ENCODE measurements at regions of chr1 and their contacts with region 1.

Region 1: DNA sequence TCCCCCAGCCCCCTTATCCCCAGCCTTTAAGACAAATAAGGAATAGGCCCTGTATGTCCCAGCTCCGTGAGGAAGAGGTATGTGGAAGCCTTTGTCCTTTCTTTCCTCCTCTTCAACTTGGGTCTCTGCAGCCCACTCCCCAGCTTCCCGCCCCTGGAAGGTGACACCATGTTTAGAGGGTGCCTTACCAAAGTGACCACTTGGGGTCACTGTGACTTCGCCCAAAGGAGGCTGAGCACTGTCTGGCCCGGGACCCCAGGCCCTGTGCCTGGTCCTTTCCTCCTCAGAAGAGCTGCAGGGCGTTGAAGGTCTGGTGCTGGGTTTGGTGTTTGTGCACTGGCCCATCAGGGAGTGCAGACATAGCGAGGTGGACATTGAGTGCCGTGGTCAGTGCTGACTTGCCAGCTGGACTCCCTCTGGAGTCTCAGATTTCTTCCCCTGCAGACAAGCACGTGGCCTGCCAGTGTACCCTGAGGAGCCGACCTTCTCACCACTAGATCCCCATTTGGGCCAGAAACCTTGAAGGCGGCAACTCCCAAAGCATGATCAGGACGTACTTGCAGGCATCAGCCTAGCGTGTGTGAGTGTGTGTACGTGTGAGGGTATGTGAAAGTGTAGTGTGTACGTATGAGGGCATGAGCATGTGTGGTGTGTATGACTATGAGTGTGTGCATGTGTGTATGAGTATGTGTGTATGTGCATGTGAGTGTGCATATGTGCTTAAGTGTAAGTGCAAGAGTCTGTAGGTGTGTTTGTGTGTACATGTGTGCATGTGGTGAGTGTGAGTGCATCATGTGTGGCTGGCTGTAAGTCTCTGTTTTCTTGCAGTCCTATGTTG is 181.4 kb upstream of the KIAA0040 start:
- DNase-seq: peak; percentile 47
- H3K4me3 Mint-ChIP-seq: no peak overlapping the region
- H3K27ac Mint-ChIP-seq: no peak overlapping the region
- H3K4me1 Mint-ChIP-seq: no peaks in the 10 kb centered on the region
- H3K27me3 Mint-ChIP-seq: peaks cover 48% of the 10 kb centered on the region
- CTCF ChIP-seq: peak; percentile 92

Region 2: GRCh38 chr1:175471039-175471800 is 97.2 kb after region 1 on chr1:
- CTCF ChIA-PET with region 1: interaction called, 10 read pairs
- POLR2A ChIA-PET with region 1: no interaction called
- intact Hi-C with region 1: no loop called
- DNase-seq: peak; percentile 95
- H3K4me3 Mint-ChIP-seq: no peak overlapping the region
- H3K27ac Mint-ChIP-seq: peak overlapping the region; percentile 65
- H3K4me1 Mint-ChIP-seq: peaks cover 30% of the 10 kb centered on the region
- H3K27me3 Mint-ChIP-seq: peaks cover 72% of the 10 kb centered on the region
- CTCF ChIP-seq: no peak

Region 3: DNA sequence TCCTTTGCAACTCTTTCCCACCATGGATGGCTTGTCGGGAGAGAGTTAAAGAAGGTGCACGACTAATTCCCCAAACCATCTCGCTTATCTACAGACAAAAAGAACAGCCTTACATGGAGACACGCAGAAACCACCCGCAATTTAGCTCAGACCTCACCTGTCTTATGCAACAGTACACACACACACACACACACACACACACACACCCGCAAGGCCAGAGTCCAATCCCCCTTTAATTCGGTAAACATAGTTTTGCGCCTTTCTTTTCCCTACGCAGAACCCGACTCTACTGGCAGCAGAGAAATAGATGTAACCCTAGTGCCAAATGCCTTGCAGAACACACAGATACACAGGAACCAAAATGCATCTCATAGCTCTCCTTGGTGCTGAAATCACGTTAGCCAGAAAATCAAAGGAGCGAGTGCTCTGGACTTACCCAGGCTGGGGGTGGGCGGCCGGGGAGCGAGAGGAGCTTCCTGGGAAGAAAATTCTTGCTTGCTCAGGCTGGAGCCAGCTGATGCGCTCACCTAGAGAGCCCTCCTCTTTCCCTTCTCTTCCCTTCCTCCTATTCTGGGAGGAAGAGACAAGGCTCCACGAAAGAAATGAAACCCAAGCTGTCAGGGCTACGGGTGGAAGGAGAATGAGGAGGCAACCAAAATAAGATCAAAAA is 368.9 kb after region 1 on chr1:
- CTCF ChIA-PET with region 1: interaction called, 23 read pairs
- POLR2A ChIA-PET with region 1: no interaction called
- intact Hi-C with region 1: loop called (anchors 1 kb)
- DNase-seq: peak; percentile 62
- H3K4me3 Mint-ChIP-seq: no peak overlapping the region
- H3K27ac Mint-ChIP-seq: no peak overlapping the region
- H3K4me1 Mint-ChIP-seq: peaks cover 6% of the 10 kb centered on the region
- H3K27me3 Mint-ChIP-seq: peaks cover 56% of the 10 kb centered on the region
- CTCF ChIP-seq: no peak

Region 4: GRCh38 chr1:176073524-176074157 is 699.6 kb after region 1 on chr1:
- CTCF ChIA-PET with region 1: interaction called, 34 read pairs
- POLR2A ChIA-PET with region 1: no interaction called
- intact Hi-C with region 1: loop called (anchors 1 kb)
- DNase-seq: peak; percentile 85
- H3K4me3 Mint-ChIP-seq: no peak overlapping the region
- H3K27ac Mint-ChIP-seq: no peak overlapping the region
- H3K4me1 Mint-ChIP-seq: peaks cover 6% of the 10 kb centered on the region
- H3K27me3 Mint-ChIP-seq: no peaks in the 10 kb centered on the region
- CTCF ChIP-seq: peak; percentile 74

Region 5: GRCh38 chr1:176843352-176844297 is 1469.6 kb after region 1 on chr1:
- CTCF ChIA-PET with region 1: interaction called, 4 read pairs
- POLR2A ChIA-PET with region 1: no interaction called
- intact Hi-C with region 1: loop called (anchors 10 kb)
- DNase-seq: peak; percentile 53
- H3K4me3 Mint-ChIP-seq: no peak overlapping the region
- H3K27ac Mint-ChIP-seq: no peak overlapping the region
- H3K4me1 Mint-ChIP-seq: no peaks in the 10 kb centered on the region
- H3K27me3 Mint-ChIP-seq: no peaks in the 10 kb centered on the region
- CTCF ChIP-seq: peak; percentile 84